CD4-positive, alpha-beta memory T cell (primary cell): ENCODE measurements at regions of chr10 and their contacts with region 1.

Region 1: GRCh38 chr10:100508691-100509150 is 10.9 kb downstream of the SEC31B start:
- DNase-seq: peak; percentile 63 to 74 (median 68)
- H3K4me3 ChIP-seq: peak overlapping the region in 1 of 2 donors; percentile 3
- H3K4me3 Mint-ChIP-seq: peak overlapping the region; percentile 16 to 90 (median 66)
- H3K27ac ChIP-seq: peak overlapping the region; percentile 22
- H3K27ac Mint-ChIP-seq: peak overlapping the region; percentile 58 to 94 (median 86)
- H3K4me1 ChIP-seq: peaks cover 58% of the 10 kb centered on the region
- H3K4me1 Mint-ChIP-seq: peaks cover 42 to 66% (median 51%) of the 10 kb centered on the region in 4 donors
- H3K27me3 ChIP-seq: no peaks in the 10 kb centered on the region
- H3K27me3 Mint-ChIP-seq: no peaks in the 10 kb centered on the region

Region 2: DNA sequence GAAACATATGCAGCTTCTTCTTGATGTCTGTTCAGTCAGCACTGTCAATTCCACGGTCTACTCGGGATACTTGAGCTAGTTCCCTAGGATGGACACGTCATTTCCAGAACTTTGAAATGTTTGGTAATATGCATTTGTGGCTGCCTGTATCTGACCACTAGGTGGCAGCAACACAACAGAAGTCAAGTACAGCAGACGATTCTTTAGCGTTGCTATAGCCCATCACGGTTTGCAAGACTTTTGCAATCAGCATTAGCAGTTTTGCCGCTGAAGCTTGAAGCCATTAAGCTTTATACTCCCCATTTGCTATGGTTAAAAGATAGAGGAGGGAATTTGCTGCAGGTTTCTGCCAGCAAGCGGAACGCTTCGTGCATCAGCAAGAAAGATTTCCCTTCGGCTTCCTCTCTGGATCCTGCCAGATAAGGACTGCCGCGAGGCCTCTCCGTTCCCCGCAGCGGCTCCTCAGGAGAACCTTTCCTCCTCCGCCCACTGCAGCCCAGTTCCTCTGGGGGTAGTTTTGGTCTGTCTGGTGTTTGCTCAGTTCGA is 662.8 kb before region 1 on chr10:
- CTCF ChIA-PET with region 1: interaction called, 4 read pairs
- POLR2A ChIA-PET with region 1: no interaction called
- intact Hi-C with region 1: loop called (anchors 5 kb)
- DNase-seq: peak; percentile 67 to 74 (median 71)
- H3K4me3 ChIP-seq: no peak overlapping the region
- H3K4me3 Mint-ChIP-seq: peak overlapping the region in 7 of 8 donors; percentile 10 to 70 (median 39)
- H3K27ac ChIP-seq: no peak overlapping the region
- H3K27ac Mint-ChIP-seq: no peak overlapping the region
- H3K4me1 ChIP-seq: peaks cover 4% of the 10 kb centered on the region
- H3K4me1 Mint-ChIP-seq: peaks cover 4 to 7% (median 5%) of the 10 kb centered on the region in 4 donors
- H3K27me3 ChIP-seq: no peaks in the 10 kb centered on the region
- H3K27me3 Mint-ChIP-seq: no peaks in the 10 kb centered on the region

Region 3: GRCh38 chr10:100346765-100347567 is 161.8 kb before region 1 on chr10 and contains the start of gene SCD:
- CTCF ChIA-PET with region 1: interaction called, 122 read pairs
- POLR2A ChIA-PET with region 1: no interaction called
- intact Hi-C with region 1: loop called (anchors 1 kb)
- DNase-seq: peak; percentile 70 to 85 (median 71)
- H3K4me3 ChIP-seq: peak within 1 kb of the TSS; percentile 23 to 74
- H3K4me3 Mint-ChIP-seq: peak within 1 kb of the TSS; percentile 79 to 92 (median 89)
- H3K27ac ChIP-seq: no peak within 1 kb of the TSS
- H3K27ac Mint-ChIP-seq: peak within 1 kb of the TSS; percentile 63 to 91 (median 80)
- H3K4me1 ChIP-seq: peaks cover 14% of the 10 kb centered on the region
- H3K4me1 Mint-ChIP-seq: peaks cover 9 to 19% (median 15%) of the 10 kb centered on the region in 4 donors
- H3K27me3 ChIP-seq: no peaks in the 10 kb centered on the region
- H3K27me3 Mint-ChIP-seq: peaks cover 0 to 1% of the 10 kb centered on the region in 2 donors
- total RNA-seq, gene SCD: 0.61 to 1.00 TPM

Region 4: DNA sequence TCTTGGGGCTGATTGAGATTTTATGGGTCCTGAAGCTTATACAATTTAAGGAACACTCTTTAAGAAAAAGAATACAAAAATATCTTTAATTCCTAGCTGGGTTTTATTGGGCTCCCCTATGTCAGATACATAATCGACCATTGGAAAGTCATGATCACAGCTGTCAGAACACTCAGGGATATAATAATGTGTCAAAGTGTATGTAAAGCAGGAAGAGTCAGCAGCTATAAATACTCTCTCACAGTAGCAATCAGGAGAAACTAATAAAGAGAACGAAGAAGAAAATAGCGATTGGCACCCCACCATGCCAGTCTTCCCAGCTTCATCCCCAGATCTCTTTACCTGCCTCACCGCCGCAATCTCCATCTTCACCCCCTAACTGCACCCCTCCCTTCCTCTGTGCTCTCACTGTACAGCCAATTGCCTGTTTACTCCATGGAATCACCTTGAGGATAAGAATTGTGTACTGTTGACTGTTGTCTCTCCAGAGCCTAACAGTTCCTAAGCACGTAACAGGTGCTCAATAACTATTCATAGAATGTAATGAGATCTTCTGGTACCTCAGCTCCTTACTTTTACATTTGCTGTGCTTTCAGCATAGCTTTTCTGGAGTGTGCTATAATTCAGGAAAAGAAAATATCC is 69.9 kb before region 1 on chr10:
- CTCF ChIA-PET with region 1: interaction called, 68 read pairs
- POLR2A ChIA-PET with region 1: interaction called, 3 read pairs
- intact Hi-C with region 1: loop called (anchors 1 kb)
- DNase-seq: no peak
- H3K4me3 ChIP-seq: no peak overlapping the region
- H3K4me3 Mint-ChIP-seq: no peak overlapping the region
- H3K27ac ChIP-seq: no peak overlapping the region
- H3K27ac Mint-ChIP-seq: no peak overlapping the region
- H3K4me1 ChIP-seq: no peaks in the 10 kb centered on the region
- H3K4me1 Mint-ChIP-seq: peaks cover 0 to 1% (median under 1%) of the 10 kb centered on the region in 4 donors
- H3K27me3 ChIP-seq: no peaks in the 10 kb centered on the region
- H3K27me3 Mint-ChIP-seq: peaks cover 1 to 2% of the 10 kb centered on the region in 2 donors

Region 5: DNA sequence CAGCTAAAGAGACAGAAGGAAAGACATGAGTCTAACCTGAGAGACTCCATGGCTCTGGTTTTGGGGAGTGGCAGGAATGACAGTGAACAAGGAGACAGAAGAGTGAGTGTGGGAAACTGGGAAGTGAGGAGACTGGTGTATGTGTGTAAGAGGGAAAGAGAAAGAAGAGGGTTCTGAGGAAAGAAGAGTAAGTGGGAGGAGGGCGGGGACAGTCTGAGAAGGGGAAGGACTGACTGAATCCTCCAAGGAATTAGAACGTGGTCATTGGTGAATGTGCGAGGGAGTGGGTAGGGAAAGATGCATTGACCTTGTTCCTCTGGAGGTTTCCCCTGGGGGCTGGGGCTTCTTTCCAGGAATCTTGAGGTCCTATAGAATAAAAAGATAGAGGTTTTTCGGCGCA is 19.3 kb before region 1 on chr10:
- CTCF ChIA-PET with region 1: interaction called, 101 read pairs
- POLR2A ChIA-PET with region 1: no interaction called
- intact Hi-C with region 1: no loop called
- DNase-seq: no peak
- H3K4me3 ChIP-seq: no peak overlapping the region
- H3K4me3 Mint-ChIP-seq: no peak overlapping the region
- H3K27ac ChIP-seq: no peak overlapping the region
- H3K27ac Mint-ChIP-seq: peak overlapping the region in 1 of 7 donors; percentile 29
- H3K4me1 ChIP-seq: no peaks in the 10 kb centered on the region
- H3K4me1 Mint-ChIP-seq: no peaks in the 10 kb centered on the region
- H3K27me3 ChIP-seq: no peaks in the 10 kb centered on the region
- H3K27me3 Mint-ChIP-seq: no peaks in the 10 kb centered on the region

Region 6: GRCh38 chr10:100518761-100519241 is 10.1 kb after region 1 on chr10:
- CTCF ChIA-PET with region 1: interaction called, 133 read pairs
- POLR2A ChIA-PET with region 1: interaction called, 9 read pairs
- intact Hi-C with region 1: loop called (anchors 1 kb)
- DNase-seq: peak; percentile 48 to 56 (median 52)
- H3K4me3 ChIP-seq: no peak overlapping the region
- H3K4me3 Mint-ChIP-seq: no peak overlapping the region
- H3K27ac ChIP-seq: no peak overlapping the region
- H3K27ac Mint-ChIP-seq: peak overlapping the region in 2 of 7 donors; percentile 43 to 82
- H3K4me1 ChIP-seq: no peaks in the 10 kb centered on the region
- H3K4me1 Mint-ChIP-seq: peaks cover 6 to 8% (median 7%) of the 10 kb centered on the region in 4 donors
- H3K27me3 ChIP-seq: no peaks in the 10 kb centered on the region
- H3K27me3 Mint-ChIP-seq: no peaks in the 10 kb centered on the region

Region 7: GRCh38 chr10:100529475-100530298 is 21.0 kb after region 1 on chr10 and contains the start of gene NDUFB8:
- CTCF ChIA-PET with region 1: interaction called, 34 read pairs
- POLR2A ChIA-PET with region 1: interaction called, 13 read pairs
- intact Hi-C with region 1: loop called (anchors 1 kb)
- DNase-seq: peak; percentile 85 to 89 (median 86)
- H3K4me3 ChIP-seq: peak within 1 kb of the TSS; percentile 87 to 100
- H3K4me3 Mint-ChIP-seq: peak within 1 kb of the TSS; percentile 85 to 100 (median 100)
- H3K27ac ChIP-seq: peak within 1 kb of the TSS; percentile 90
- H3K27ac Mint-ChIP-seq: peak within 1 kb of the TSS; percentile 79 to 100 (median 99)
- H3K4me1 ChIP-seq: peaks cover 34% of the 10 kb centered on the region
- H3K4me1 Mint-ChIP-seq: peaks cover 21 to 45% (median 30%) of the 10 kb centered on the region in 4 donors
- H3K27me3 ChIP-seq: no peaks in the 10 kb centered on the region
- H3K27me3 Mint-ChIP-seq: no peaks in the 10 kb centered on the region
- total RNA-seq, gene NDUFB8: 141 to 162 TPM

Region 8: GRCh38 chr10:100827819-100828737 is 319.4 kb after region 1 on chr10:
- CTCF ChIA-PET with region 1: no interaction called
- POLR2A ChIA-PET with region 1: no interaction called
- intact Hi-C with region 1: no loop called
- DNase-seq: peak in 4 of 5 donors; percentile 12 to 47 (median 16)
- H3K4me3 ChIP-seq: peak overlapping the region; percentile 11 to 23
- H3K4me3 Mint-ChIP-seq: peak overlapping the region; percentile 83 to 94 (median 87)
- H3K27ac ChIP-seq: no peak overlapping the region
- H3K27ac Mint-ChIP-seq: no peak overlapping the region
- H3K4me1 ChIP-seq: peaks cover 29% of the 10 kb centered on the region
- H3K4me1 Mint-ChIP-seq: peaks cover 14 to 48% (median 24%) of the 10 kb centered on the region in 4 donors
- H3K27me3 ChIP-seq: peaks cover 55% of the 10 kb centered on the region
- H3K27me3 Mint-ChIP-seq: peaks cover 58 to 76% of the 10 kb centered on the region in 2 donors